Left cardiac atrium (tissue), 4 donors: ENCODE measurements at regions of chr18 and their contacts with region 1.

Region 1: DNA sequence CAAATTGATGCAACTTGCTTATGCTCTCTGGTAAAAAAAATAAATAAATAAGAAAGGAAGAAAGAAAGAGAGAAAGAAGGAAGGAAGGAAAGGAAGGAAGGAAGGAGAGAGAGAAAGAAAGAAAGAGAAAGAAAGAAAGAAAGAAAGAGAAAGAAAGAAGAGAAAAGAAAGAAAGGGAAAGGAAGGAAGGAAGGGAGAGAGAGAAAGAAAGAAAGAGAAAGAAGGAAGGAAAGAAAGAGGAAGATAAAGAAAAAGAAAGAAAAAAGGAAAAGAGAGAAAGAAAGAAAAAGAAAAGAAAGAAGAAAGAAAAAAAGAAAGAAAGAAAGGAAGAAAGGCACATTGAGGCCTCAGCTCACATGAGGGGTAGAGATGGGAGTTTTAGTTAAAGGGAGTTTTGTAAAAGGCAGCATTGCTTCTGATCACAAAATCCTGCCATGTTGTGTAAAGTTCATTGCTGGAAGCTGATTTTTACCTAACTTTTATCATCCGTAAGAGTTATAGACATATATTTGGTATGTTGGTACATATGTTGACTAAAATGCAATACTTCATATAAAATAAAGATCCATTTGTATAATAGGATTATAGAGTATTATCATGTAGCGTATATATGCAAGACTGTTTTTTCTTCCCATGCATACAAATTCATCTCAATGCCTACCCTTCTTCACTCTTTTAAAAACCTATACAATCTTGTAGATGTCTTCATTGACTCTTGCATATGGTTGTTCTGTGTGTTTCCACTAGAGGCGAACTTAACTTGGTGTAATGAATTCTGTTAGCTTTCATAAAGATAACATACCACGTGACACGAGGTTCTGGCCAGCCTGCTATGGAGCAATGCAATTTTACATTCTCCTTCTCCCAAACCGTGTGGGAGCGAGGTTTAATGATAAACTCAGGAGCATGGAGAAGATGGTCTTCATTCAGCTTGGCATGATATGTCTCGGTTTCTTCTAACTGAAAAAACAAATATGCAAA is 32.8 kb downstream of the MYOM1 start:
- DNase-seq: peak; percentile 28
- ATAC-seq: peak; percentile 53 to 71

Region 2: GRCh38 chr18:3219631-3220335 is 32.8 kb after region 1 on chr18 and contains the start of gene MYOM1:
- intact Hi-C with region 1: loop called in 1 of 2 experiments (anchors 5 kb)
- DNase-seq: no peak
- ATAC-seq: peak; percentile 71 to 80
- total RNA-seq, gene MYOM1: 263 to 351 TPM